ENCODE measurements at regions of chr15 and their contacts with region 1.

Region 1: DNA sequence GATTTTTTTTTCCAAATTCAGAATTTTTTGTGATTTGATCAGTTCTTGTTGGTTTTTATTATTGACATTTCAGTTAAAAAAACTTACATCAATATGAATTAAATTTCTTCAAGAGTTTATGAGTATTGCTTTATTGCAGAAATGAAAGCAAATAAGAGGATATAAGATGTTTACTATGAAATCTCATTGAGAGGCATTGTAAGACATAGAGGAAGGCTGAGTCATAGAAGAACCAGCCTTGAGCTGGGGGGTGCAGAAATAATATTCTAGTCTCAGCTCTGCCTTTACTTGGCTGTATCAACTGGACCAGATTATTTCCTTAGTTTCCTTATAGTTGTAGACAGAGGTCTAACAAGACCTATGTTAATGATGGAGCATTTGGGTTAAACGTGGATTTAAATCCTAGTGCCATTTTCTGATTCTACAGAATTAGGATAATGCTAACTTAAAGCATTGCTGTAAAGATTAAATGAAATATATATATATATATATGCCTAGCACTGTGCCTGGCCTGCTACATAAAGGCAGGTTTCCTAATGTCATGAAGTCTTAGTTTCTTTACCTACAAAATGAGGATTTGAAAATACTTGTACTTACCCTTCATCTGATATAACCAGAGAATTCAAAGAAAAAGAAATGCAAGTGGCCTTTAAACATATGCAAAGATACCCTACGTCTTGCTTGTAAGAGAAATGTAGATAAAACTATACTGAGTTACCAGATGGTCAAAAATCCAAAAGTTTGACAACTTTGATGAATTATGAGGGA is 7.3 kb downstream of the FAM98B start:
- DNase-seq: peak; percentile 44
- CTCF ChIP-seq: no peak

Region 2: GRCh38 chr15:38474155-38474757 is 13.0 kb after region 1 on chr15:
- CTCF ChIA-PET with region 1: interaction called, 18 read pairs
- POLR2A ChIA-PET with region 1: no interaction called
- DNase-seq: peak; percentile 49
- CTCF ChIP-seq: peak; percentile 54